PC-9 (cell line): ENCODE measurements at regions of chr14 and their contacts with region 1.

Region 1: DNA sequence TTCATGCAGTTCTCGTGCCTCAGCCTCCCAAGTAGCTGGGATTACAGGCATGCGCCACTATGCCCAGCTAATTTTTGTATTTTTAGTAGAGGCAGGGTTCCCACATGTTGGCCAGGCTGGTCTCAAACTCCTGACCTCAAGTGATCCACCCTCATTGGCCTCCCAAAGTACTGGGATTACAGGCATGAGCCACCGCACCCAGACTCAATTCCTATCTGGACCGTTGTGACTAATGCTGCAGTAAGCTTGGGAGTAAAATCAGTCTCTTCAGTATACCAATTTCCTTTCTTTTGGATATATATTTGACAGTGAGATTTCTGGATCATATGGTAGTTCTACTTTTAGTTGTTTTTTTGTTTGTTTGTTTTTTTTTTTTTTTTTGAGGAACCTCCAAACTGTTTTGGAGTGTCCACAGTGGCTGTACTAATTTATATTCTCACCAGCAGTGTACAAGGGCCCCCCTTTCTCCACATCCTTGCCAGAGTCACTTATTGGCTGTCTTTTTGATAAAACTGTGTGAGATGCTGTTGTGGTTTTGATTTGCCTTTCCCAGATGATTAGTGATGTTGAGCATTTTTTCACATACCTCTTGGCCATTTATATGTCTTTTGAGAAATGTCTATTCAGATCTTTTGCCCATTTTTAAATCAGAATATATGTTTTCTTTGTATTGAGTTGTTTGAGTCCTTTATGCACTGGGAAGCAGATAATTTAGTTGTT is 37.3 kb upstream of the EVL start:
- DNase-seq: no peak
- H3K4me3 ChIP-seq: no peak overlapping the region
- H3K27ac ChIP-seq: no peak overlapping the region
- H3K4me1 ChIP-seq: peaks cover 35% of the 10 kb centered on the region
- H3K27me3 ChIP-seq: no peaks in the 10 kb centered on the region
- CTCF ChIP-seq: no peak

Region 2: GRCh38 chr14:100037924-100038506 is 10.1 kb after region 1 on chr14:
- CTCF ChIA-PET with region 1: interaction called, 10 read pairs
- POLR2A ChIA-PET with region 1: no interaction called
- intact Hi-C with region 1: no loop called
- DNase-seq: no peak
- H3K4me3 ChIP-seq: no peak overlapping the region
- H3K27ac ChIP-seq: no peak overlapping the region
- H3K4me1 ChIP-seq: peaks cover 8% of the 10 kb centered on the region
- H3K27me3 ChIP-seq: no peaks in the 10 kb centered on the region
- CTCF ChIP-seq: no peak